ENCODE measurements at regions of chr2 and their contacts with region 1.

Region 1: DNA sequence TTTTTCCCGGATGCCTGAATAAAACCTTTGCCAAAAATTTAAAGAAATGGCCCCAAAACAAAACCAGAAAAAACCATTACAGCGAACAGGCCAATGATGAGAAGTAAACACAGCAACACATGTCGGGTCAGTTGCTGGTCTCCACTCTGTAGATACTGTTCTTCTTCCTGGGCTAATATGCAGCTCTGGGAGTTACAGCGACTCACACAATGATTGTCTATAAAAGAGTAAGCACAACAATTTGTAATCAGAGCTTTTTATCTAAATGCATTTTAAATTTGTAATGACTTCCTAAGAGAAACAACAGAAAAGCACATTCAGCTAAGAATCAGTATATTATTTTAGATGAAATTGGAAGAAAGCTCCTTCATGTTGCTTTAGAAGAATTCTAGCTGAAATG is 40.3 kb downstream of the GPR155 start:
- DNase-seq: no peak
- H3K4me3 ChIP-seq: no peak overlapping the region
- H3K27ac ChIP-seq: no peak overlapping the region
- H3K4me1 ChIP-seq: no peaks in the 10 kb centered on the region
- H3K27me3 ChIP-seq: no peaks in the 10 kb centered on the region
- CTCF ChIP-seq: no peak

Region 2: DNA sequence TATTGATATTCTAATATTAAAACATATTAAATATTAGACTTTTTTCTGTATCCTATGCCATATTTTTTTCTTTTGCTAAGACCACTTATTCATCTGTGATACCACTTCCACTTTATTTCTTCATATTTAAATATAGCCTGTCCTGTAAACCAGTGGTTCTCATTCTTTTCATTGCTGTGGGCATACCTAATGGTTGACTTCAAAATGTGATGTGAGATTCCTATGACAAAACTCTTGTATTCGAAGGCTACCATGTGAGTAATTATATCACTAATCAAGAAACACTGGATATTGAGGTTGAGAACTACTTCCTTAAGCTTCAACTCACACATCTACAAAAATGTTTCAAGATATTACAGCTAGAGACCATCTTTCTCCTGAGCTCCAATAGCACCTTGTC is 47.4 kb before region 1 on chr2:
- CTCF ChIA-PET with region 1: no interaction called
- POLR2A ChIA-PET with region 1: no interaction called
- intact Hi-C with region 1: no loop called
- DNase-seq: no peak
- H3K4me3 ChIP-seq: no peak overlapping the region
- H3K27ac ChIP-seq: no peak overlapping the region
- H3K4me1 ChIP-seq: peaks cover 6% of the 10 kb centered on the region
- H3K27me3 ChIP-seq: no peaks in the 10 kb centered on the region
- CTCF ChIP-seq: no peak

Region 3: DNA sequence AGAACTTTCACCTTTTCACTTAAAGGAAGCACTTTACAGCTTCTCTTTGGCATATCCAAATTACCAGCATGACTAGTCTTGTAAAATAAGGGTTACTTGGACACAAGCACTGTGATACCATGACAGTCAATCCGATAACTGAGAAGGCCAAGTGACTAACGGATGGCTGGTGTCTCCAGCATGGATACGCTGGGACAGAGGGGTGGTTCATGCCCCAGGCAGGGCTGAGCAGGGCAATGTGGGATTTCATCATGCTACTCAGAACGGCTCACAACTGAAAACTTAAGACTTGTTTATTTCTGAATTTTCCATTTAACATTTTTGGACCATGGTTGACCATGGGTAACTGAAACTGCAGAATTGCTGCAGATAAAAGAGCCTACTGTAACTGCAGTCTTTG is 83.4 kb after region 1 on chr2:
- CTCF ChIA-PET with region 1: no interaction called
- POLR2A ChIA-PET with region 1: interaction called, 10 read pairs
- intact Hi-C with region 1: no loop called
- DNase-seq: no peak
- H3K4me3 ChIP-seq: no peak overlapping the region
- H3K27ac ChIP-seq: no peak overlapping the region
- H3K4me1 ChIP-seq: no peaks in the 10 kb centered on the region
- H3K27me3 ChIP-seq: peaks cover 26% of the 10 kb centered on the region
- CTCF ChIP-seq: no peak

Region 4: GRCh38 chr2:175976391-175977157 is 1530.0 kb after region 1 on chr2:
- CTCF ChIA-PET with region 1: no interaction called
- POLR2A ChIA-PET with region 1: no interaction called
- intact Hi-C with region 1: no loop called
- DNase-seq: no peak
- H3K4me3 ChIP-seq: no peak overlapping the region
- H3K27ac ChIP-seq: no peak overlapping the region
- H3K4me1 ChIP-seq: no peaks in the 10 kb centered on the region
- H3K27me3 ChIP-seq: no peaks in the 10 kb centered on the region
- CTCF ChIP-seq: no peak